MCF 10A (cell line): ENCODE measurements at regions of chr3 and their contacts with region 1.

Region 1: GRCh38 chr3:65126527-65127410 is 439.0 kb upstream of the ADAMTS9 start:
- DNase-seq: peak; percentile 63
- H3K4me3 Mint-ChIP-seq: peak overlapping the region; percentile 17
- H3K27ac Mint-ChIP-seq: peak overlapping the region; percentile 49
- H3K4me1 Mint-ChIP-seq: peaks cover 19% of the 10 kb centered on the region
- H3K27me3 Mint-ChIP-seq: no peaks in the 10 kb centered on the region
- CTCF ChIP-seq: no peak

Region 2: DNA sequence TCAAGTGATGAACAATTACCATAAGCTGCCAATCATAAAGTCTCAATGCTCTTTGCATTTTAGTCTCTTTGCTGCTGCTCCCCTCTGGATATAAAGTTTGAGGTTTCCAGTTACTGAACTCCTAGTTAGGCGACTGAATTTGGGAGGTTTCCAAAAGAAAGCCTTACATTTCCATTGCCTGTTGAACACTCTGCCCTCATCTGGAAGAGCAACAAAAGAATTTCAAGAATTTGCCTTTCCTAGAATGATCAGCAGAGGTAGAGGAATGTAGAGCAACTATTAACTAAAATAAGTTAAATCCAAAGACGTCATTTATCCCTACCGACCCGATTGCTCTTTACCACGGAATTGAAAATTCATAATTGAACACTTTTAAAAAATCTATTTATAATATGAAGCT is 848.1 kb before region 1 on chr3:
- CTCF ChIA-PET with region 1: no interaction called
- POLR2A ChIA-PET with region 1: no interaction called
- intact Hi-C with region 1: no loop called
- DNase-seq: no peak
- H3K4me3 Mint-ChIP-seq: no peak overlapping the region
- H3K27ac Mint-ChIP-seq: no peak overlapping the region
- H3K4me1 Mint-ChIP-seq: peaks cover 11% of the 10 kb centered on the region
- H3K27me3 Mint-ChIP-seq: no peaks in the 10 kb centered on the region
- CTCF ChIP-seq: no peak

Region 3: GRCh38 chr3:65146179-65146578 is 19.4 kb after region 1 on chr3:
- CTCF ChIA-PET with region 1: no interaction called
- POLR2A ChIA-PET with region 1: interaction called, 16 read pairs
- intact Hi-C with region 1: no loop called
- DNase-seq: peak; percentile 92
- H3K4me3 Mint-ChIP-seq: no peak overlapping the region
- H3K27ac Mint-ChIP-seq: peak overlapping the region; percentile 85
- H3K4me1 Mint-ChIP-seq: peaks cover 13% of the 10 kb centered on the region
- H3K27me3 Mint-ChIP-seq: no peaks in the 10 kb centered on the region
- CTCF ChIP-seq: no peak

Region 4: GRCh38 chr3:66121318-66121717 is 994.5 kb after region 1 on chr3:
- CTCF ChIA-PET with region 1: no interaction called
- POLR2A ChIA-PET with region 1: no interaction called
- intact Hi-C with region 1: no loop called
- DNase-seq: no peak
- H3K4me3 Mint-ChIP-seq: no peak overlapping the region
- H3K27ac Mint-ChIP-seq: no peak overlapping the region
- H3K4me1 Mint-ChIP-seq: peaks cover 4% of the 10 kb centered on the region
- H3K27me3 Mint-ChIP-seq: no peaks in the 10 kb centered on the region
- CTCF ChIP-seq: no peak